B cell (primary cell): ENCODE measurements at regions of chr1 and their contacts with region 1.

Region 1: GRCh38 chr1:27300341-27301051 is 21.5 kb upstream of the TMEM222 start:
- DNase-seq: peak; percentile 87
- ATAC-seq: peak; percentile 93
- H3K4me3 ChIP-seq: no peak overlapping the region
- H3K4me3 Mint-ChIP-seq: no peak overlapping the region
- H3K27ac ChIP-seq: no peak overlapping the region
- H3K27ac Mint-ChIP-seq: no peak overlapping the region
- H3K4me1 ChIP-seq: peaks cover 0 to 8% of the 10 kb centered on the region in 2 donors
- H3K4me1 Mint-ChIP-seq: peaks cover 3% of the 10 kb centered on the region
- H3K27me3 ChIP-seq: no peaks in the 10 kb centered on the region
- H3K27me3 Mint-ChIP-seq: no peaks in the 10 kb centered on the region
- CTCF ChIP-seq: peak; percentile 95

Region 2: GRCh38 chr1:26921540-26922430 is 378.7 kb before region 1 on chr1 and contains the start of gene NUDC:
- CTCF ChIA-PET with region 1: no interaction called
- POLR2A ChIA-PET with region 1: no interaction called
- intact Hi-C with region 1: no loop called
- DNase-seq: peak; percentile 96
- ATAC-seq: peak; percentile 96
- H3K4me3 ChIP-seq: peak within 1 kb of the TSS; percentile 61 to 88 (median 80)
- H3K4me3 Mint-ChIP-seq: peak within 1 kb of the TSS; percentile 93
- H3K27ac ChIP-seq: peak within 1 kb of the TSS; percentile 68 to 93
- H3K27ac Mint-ChIP-seq: peak within 1 kb of the TSS; percentile 93
- H3K4me1 ChIP-seq: peaks cover 17 to 20% of the 10 kb centered on the region in 2 donors
- H3K4me1 Mint-ChIP-seq: peaks cover 33% of the 10 kb centered on the region
- H3K27me3 ChIP-seq: no peaks in the 10 kb centered on the region
- H3K27me3 Mint-ChIP-seq: no peaks in the 10 kb centered on the region
- CTCF ChIP-seq: no peak
- total RNA-seq, gene NUDC: 45.3 and 50.1 TPM in 2 replicates

Region 3: GRCh38 chr1:27111626-27112573 is 188.6 kb before region 1 on chr1:
- CTCF ChIA-PET with region 1: interaction called, 12 read pairs
- POLR2A ChIA-PET with region 1: interaction called, 8 read pairs
- intact Hi-C with region 1: no loop called
- DNase-seq: peak; percentile 74
- ATAC-seq: peak; percentile 98
- H3K4me3 ChIP-seq: no peak overlapping the region
- H3K4me3 Mint-ChIP-seq: no peak overlapping the region
- H3K27ac ChIP-seq: peak overlapping the region; percentile 4 to 65
- H3K27ac Mint-ChIP-seq: peak overlapping the region; percentile 85
- H3K4me1 ChIP-seq: peaks cover 13 to 26% of the 10 kb centered on the region in 2 donors
- H3K4me1 Mint-ChIP-seq: peaks cover 27% of the 10 kb centered on the region
- H3K27me3 ChIP-seq: no peaks in the 10 kb centered on the region
- H3K27me3 Mint-ChIP-seq: no peaks in the 10 kb centered on the region
- CTCF ChIP-seq: peak; percentile 26

Region 4: DNA sequence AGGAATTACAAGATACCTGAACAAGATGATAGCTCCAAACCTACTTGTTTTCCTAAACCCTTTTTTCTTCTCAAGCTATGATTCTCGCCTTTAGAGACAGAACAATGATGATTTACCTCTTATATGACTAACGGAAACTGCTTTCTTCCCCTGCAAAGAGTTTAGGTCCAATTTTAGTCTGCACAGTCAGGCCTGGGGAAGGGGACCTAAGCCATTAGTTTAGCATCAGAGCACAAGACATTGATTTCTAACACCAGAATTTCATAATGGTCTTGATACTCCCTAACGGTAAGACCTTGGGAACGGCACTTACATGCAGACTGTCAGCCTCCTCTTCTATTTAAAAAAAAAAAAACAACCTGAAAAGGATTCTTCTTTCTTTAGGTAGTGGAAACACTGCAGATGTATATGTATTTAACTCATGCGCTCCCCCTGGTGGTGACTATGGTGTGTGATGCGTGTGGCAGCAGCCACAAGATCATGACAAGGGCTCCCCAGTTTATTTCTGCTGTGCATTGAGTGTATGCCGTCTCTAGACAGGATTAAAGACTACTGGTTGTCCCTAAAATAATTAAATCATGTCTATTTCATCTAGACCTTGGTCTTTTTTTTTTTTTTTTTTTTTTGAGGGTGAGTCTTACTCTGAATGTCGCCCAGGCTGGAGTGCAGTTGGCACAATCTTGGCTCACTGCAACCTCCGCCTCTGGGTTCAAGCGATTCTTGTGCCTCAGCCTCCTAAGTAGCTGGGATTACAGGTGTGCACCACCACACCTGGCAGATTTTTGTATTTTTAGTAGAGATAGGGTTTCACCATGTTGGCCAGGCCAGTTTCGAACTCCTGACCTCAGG is 15.8 kb before region 1 on chr1:
- CTCF ChIA-PET with region 1: interaction called, 50 read pairs
- POLR2A ChIA-PET with region 1: no interaction called
- intact Hi-C with region 1: no loop called
- DNase-seq: peak; percentile 88
- ATAC-seq: peak; percentile 93
- H3K4me3 ChIP-seq: no peak overlapping the region
- H3K4me3 Mint-ChIP-seq: no peak overlapping the region
- H3K27ac ChIP-seq: peak overlapping the region in 1 of 2 donors; percentile 47
- H3K27ac Mint-ChIP-seq: no peak overlapping the region
- H3K4me1 ChIP-seq: peaks cover 0 to 9% of the 10 kb centered on the region in 2 donors
- H3K4me1 Mint-ChIP-seq: peaks cover 12% of the 10 kb centered on the region
- H3K27me3 ChIP-seq: no peaks in the 10 kb centered on the region
- H3K27me3 Mint-ChIP-seq: no peaks in the 10 kb centered on the region
- CTCF ChIP-seq: peak; percentile 87

Region 5: DNA sequence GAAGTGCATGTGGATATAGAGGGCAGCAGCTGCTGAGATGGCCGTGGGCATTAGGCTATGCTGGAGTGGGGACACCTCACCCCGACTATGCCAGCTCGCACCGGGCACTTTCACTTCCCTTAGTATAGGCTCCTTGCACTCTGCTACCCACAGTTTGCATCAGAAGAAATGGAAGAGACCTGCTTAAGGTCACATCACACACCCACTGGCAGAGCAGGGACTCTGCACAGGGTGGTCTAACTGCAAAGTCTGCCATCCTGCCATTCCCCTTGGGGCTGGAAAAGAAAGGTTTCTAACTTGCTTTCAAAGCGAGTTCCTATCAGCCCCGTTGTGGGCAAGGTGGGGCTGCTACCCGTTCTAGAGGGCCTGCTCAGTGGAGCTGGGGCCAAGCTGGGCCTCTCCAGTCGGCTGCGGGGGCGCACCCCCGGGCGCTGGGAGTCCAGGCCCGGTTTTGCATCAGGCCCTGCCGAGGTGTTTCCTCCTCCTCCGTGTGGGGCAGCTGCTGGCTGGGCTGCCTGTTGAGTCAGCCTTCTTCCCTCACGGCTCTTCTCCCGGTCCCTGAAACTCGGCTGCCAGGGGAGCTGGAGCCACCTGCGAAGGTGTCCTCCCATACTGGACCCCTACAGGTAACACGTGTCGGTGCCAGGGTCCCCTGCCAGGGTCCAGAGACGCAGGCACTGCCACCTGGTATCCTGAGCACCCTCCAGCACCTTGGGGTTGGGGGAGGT is 41.2 kb after region 1 on chr1 and contains the start of gene SYTL1:
- CTCF ChIA-PET with region 1: interaction called, 4 read pairs
- POLR2A ChIA-PET with region 1: interaction called, 13 read pairs
- intact Hi-C with region 1: no loop called
- DNase-seq: peak; percentile 89
- ATAC-seq: peak; percentile 78
- H3K4me3 ChIP-seq: peak within 1 kb of the TSS; percentile 61 to 89 (median 79)
- H3K4me3 Mint-ChIP-seq: peak within 1 kb of the TSS; percentile 96
- H3K27ac ChIP-seq: peak within 1 kb of the TSS; percentile 85 to 88
- H3K27ac Mint-ChIP-seq: peak within 1 kb of the TSS; percentile 98
- H3K4me1 ChIP-seq: peaks cover 37 to 59% of the 10 kb centered on the region in 2 donors
- H3K4me1 Mint-ChIP-seq: peaks cover 64% of the 10 kb centered on the region
- H3K27me3 ChIP-seq: no peaks in the 10 kb centered on the region
- H3K27me3 Mint-ChIP-seq: no peaks in the 10 kb centered on the region
- CTCF ChIP-seq: no peak
- total RNA-seq, gene SYTL1: 156 and 159 TPM in 2 replicates

Region 6: GRCh38 chr1:27392096-27392777 is 91.7 kb after region 1 on chr1 and contains the start of gene GPR3:
- CTCF ChIA-PET with region 1: interaction called, 402 read pairs
- POLR2A ChIA-PET with region 1: interaction called, 13 read pairs
- intact Hi-C with region 1: loop called (anchors 1 kb)
- DNase-seq: peak; percentile 96
- ATAC-seq: peak; percentile 91
- H3K4me3 ChIP-seq: peak within 1 kb of the TSS in 4 of 5 experiments; percentile 34 to 60 (median 56)
- H3K4me3 Mint-ChIP-seq: peak within 1 kb of the TSS; percentile 81
- H3K27ac ChIP-seq: peak within 1 kb of the TSS in 1 of 2 donors; percentile 50
- H3K27ac Mint-ChIP-seq: peak within 1 kb of the TSS; percentile 67
- H3K4me1 ChIP-seq: peaks cover 12 to 24% of the 10 kb centered on the region in 2 donors
- H3K4me1 Mint-ChIP-seq: peaks cover 22% of the 10 kb centered on the region
- H3K27me3 ChIP-seq: no peaks in the 10 kb centered on the region
- H3K27me3 Mint-ChIP-seq: peaks cover 3% of the 10 kb centered on the region
- CTCF ChIP-seq: peak; percentile 65
- total RNA-seq, gene GPR3: not detected in 2 replicates